Naive thymus-derived CD4-positive, alpha-beta T cell (primary cell): ENCODE measurements at regions of chr12 and their contacts with region 1.

Region 1: DNA sequence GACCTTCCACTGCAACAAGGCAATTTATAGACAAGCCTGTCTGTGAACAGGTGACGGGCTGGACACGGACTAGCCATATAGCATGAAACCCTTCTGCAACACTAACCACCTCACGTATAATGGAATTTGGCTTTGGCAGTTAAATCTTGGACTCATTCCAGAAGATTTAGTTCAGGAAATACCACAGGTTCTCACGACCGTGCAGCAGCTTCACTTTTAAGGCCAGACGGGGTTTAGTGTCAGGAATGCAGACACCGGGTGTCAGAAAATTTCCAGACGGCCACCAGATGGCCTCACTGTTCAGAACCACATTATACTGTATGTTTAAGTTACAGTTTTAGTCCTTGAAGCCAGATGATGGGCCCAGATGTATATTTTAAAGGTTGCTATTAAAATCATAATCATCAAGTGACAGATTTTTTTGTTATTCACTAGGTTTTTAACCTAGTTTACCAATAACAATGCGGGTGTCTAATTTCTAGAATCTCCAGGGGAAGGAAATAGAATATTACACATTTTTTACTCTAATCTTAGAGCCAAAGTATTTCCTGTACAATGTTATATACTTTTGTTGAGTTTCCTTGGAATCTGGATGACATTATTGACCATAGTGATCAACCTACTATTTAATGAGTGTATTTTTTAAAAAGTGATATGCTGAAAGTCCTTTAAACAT is 90.5 kb upstream of the TMPO start:
- DNase-seq: peak; percentile 13 to 52 (median 44)
- ATAC-seq: peak; percentile 83
- H3K4me3 ChIP-seq: no peak overlapping the region
- H3K4me3 Mint-ChIP-seq: no peak overlapping the region
- H3K27ac ChIP-seq: no peak overlapping the region
- H3K27ac Mint-ChIP-seq: no peak overlapping the region
- H3K4me1 ChIP-seq: no peaks in the 10 kb centered on the region
- H3K4me1 Mint-ChIP-seq: peaks cover 0 to 6% (median 5%) of the 10 kb centered on the region in 7 donors
- H3K27me3 ChIP-seq: no peaks in the 10 kb centered on the region
- H3K27me3 Mint-ChIP-seq: peaks cover 0 to 9% (median 0%) of the 10 kb centered on the region in 5 donors

Region 2: DNA sequence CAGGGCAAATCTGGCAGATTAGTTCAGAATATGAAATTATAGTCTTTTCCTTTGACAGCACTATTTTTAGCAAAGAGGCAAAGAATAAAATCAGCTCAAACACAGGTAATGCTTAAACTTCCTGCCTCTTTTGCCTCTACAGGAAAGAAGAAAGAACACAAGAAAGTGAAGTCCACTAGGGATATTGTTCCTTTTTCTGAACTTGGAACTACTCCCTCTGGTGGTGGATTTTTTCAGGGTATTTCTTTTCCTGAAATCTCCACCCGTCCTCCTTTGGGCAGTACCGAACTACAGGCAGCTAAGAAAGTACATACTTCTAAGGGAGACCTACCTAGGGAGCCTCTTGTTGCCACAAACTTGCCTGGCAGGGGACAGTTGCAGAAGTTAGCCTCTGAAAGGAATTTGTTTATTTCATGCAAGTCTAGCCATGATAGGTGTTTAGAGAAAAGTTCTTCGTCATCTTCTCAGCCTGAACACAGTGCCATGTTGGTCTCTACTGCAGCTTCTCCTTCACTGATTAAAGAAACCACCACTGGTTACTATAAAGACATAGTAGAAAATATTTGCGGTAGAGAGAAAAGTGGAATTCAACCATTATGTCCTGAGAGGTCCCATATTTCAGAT is 107.9 kb after region 1 on chr12:
- CTCF ChIA-PET with region 1: no interaction called
- POLR2A ChIA-PET with region 1: no interaction called
- intact Hi-C with region 1: loop called (anchors 1 to 5 kb)
- DNase-seq: peak in 7 of 9 donors; percentile 11 to 40 (median 32)
- ATAC-seq: peak; percentile 68
- H3K4me3 ChIP-seq: no peak overlapping the region
- H3K4me3 Mint-ChIP-seq: no peak overlapping the region
- H3K27ac ChIP-seq: no peak overlapping the region
- H3K27ac Mint-ChIP-seq: peak overlapping the region in 2 of 9 donors; percentile 22 to 30
- H3K4me1 ChIP-seq: no peaks in the 10 kb centered on the region
- H3K4me1 Mint-ChIP-seq: peaks cover 4 to 38% (median 17%) of the 10 kb centered on the region in 7 donors
- H3K27me3 ChIP-seq: no peaks in the 10 kb centered on the region
- H3K27me3 Mint-ChIP-seq: no peaks in the 10 kb centered on the region